GM10248 (cell line): ENCODE measurements at regions of chr10 and their contacts with region 1.

Region 1: DNA sequence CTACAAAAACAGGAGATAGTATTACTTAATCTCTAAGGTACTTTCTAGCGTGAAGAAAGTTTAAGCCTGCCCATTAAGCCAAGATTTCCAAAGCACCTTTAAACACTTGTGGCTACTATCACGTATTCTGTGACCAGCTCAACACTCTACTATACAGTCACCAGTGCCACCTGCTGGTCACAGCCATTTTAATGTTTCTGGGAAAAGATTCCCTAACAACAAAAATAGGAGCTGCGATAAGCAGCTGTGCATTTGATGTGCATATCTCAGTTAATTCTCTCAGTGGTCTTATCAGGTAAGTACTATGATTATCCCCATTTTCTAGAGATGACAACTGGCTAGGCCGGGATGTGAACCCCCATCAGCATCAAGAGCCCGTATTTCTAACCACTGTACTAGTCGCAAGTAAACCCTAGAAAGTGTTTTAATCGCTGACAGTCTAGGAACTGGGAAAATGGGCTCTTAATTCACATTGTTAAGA is 860 bp downstream of the SEC31B start:
- DNase-seq: peak; percentile 57
- CTCF ChIP-seq: peak; percentile 69

Region 2: DNA sequence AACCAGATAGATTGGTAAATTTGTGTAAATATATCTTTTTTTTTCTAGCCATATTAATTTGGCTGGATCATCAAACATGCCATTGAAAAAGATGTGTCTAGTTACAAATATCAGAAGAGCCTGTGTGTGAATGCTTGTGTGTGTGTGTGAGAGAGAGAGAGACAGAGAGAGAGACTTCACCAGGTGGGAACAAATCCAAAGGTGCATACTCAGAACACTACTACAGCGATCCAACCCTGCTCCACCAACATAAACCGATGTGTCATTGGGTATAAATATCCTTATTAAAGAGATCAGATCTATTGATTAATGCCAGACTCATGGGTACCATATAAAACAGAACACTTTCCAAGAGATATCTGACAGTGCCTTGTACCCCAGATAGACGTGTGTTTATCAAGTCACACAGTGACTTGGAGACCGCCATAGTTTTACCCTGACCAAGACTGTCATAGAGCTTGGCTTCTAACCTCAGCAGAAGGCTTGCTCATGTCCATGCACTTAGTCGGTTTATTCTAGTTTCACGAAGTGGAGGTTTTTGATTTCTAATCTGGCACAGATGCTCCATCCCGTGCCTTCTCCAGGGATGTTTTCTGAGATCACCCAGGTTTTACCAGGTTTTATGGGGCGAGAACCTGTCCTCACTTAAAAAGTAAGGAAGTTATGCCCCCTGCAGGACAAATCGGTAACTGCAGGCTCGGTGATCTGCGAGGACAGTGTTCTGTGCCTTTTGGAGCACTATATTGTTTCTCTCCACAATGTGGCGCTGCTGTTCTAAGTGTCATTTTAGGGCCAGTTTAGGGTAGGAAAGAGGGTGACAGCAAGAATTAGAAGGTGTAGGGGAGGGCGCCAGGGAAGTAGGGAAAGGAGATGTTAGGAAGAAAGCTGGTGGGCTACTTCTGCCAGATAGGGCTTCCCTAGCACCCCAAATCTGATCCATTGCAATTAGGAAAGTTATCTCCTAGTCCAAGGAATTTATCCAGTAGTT is 85.3 kb before region 1 on chr10:
- CTCF ChIA-PET with region 1: interaction called, 43 read pairs
- POLR2A ChIA-PET with region 1: no interaction called
- DNase-seq: peak; percentile 85
- CTCF ChIP-seq: peak; percentile 98

Region 3: DNA sequence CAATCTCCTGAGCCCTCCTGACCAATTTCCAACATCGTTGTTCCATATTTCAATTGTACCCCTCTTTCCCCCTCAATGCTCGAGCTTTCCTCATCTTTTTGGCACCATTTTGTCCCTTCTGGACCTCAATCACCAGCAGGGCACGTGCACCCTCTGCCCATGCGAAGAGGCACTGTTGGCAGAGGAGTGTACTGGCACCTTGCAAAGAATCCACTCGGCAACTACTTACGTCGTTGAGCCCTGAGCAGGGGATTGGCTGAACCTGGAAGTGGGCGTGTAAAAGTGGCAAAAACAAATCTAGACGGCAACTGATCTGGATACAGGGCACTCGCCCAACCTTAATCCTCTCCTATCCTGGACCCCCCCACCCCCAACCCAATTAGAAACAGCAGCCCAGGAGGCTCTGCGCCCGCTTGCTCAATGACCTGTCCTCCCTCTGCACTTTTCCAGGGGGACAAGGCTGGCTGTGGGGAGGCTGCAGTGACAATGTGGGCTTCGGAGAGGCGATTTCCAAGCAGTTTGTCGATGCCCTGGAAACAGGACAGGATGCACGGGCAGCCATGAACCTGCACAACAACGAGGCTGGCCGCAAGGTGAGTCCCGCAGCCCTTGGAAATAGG is 37.2 kb before region 1 on chr10:
- CTCF ChIA-PET with region 1: interaction called, 20 read pairs
- POLR2A ChIA-PET with region 1: no interaction called
- DNase-seq: peak; percentile 89
- CTCF ChIP-seq: no peak

Region 4: DNA sequence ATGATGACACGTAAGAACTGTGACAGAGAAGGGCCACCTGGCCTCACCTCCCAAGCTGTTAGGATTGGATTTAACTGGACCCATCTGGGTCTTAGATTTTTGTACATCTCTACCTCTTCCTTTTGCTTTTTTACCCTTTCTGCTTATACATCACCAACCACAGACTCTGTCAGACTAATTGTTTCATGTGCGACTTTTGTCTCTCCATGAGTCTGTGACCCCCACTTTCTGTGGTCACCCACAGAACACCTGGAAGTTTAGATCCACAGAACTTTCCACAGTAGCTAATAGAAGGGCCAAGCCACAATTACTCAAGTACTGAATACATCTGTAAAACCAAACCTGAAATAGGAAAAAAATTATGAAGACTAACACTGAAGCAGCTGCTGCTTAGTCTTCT is 22.2 kb before region 1 on chr10:
- CTCF ChIA-PET with region 1: interaction called, 17 read pairs
- POLR2A ChIA-PET with region 1: interaction called, 3 read pairs
- DNase-seq: no peak
- CTCF ChIP-seq: no peak

Region 5: GRCh38 chr10:100529475-100530298 is 10.9 kb after region 1 on chr10 and contains the start of gene NDUFB8:
- CTCF ChIA-PET with region 1: interaction called, 34 read pairs
- POLR2A ChIA-PET with region 1: no interaction called
- DNase-seq: peak; percentile 84
- CTCF ChIP-seq: no peak